ENCODE measurements at regions of chr7 and their contacts with region 1.

Region 1: GRCh38 chr7:97845622-97846203 is 26.5 kb downstream of the ASNS start:
- DNase-seq: peak; percentile 43
- H3K4me3 Mint-ChIP-seq: no peak overlapping the region
- H3K27ac Mint-ChIP-seq: no peak overlapping the region
- H3K4me1 Mint-ChIP-seq: no peaks in the 10 kb centered on the region
- H3K27me3 Mint-ChIP-seq: peaks cover 16% of the 10 kb centered on the region
- CTCF ChIP-seq: peak; percentile 24

Region 2: GRCh38 chr7:97499204-97499603 is 346.5 kb before region 1 on chr7:
- CTCF ChIA-PET with region 1: interaction called, 11 read pairs
- POLR2A ChIA-PET with region 1: no interaction called
- intact Hi-C with region 1: loop called (anchors 2 kb)
- DNase-seq: peak; percentile 56
- H3K4me3 Mint-ChIP-seq: no peak overlapping the region
- H3K27ac Mint-ChIP-seq: no peak overlapping the region
- H3K4me1 Mint-ChIP-seq: no peaks in the 10 kb centered on the region
- H3K27me3 Mint-ChIP-seq: peaks cover 31% of the 10 kb centered on the region
- CTCF ChIP-seq: peak; percentile 46

Region 3: DNA sequence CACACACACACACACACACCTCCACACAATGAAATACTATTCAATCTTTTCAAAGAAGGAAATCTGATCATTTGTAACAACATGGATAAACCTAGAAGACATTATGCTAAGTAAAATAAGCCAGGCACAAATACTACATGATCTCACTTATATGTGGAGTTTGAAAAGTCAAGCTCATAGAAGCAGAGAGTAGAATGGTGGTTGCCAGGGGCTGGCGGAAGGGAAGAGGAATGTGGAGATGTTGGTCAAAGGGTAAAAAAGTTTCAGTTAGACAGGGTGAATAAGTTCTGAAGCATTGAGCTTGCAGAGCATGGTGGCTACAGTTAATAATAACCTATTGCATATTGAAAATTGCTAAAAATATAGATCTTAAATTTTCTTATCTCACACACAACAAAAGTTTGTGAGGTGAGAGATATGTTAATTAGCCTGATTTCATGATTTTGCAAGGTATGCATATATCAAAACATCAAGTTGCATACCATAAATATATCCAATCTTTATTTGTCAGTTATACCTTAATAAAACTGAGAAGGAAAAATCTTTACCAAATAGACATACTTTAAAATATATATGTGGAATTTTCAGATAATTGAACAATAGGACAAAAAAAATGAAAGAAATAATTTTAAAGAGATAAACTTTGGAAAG is 97.4 kb before region 1 on chr7:
- CTCF ChIA-PET with region 1: no interaction called
- POLR2A ChIA-PET with region 1: no interaction called
- intact Hi-C with region 1: no loop called
- DNase-seq: no peak
- H3K4me3 Mint-ChIP-seq: no peak overlapping the region
- H3K27ac Mint-ChIP-seq: no peak overlapping the region
- H3K4me1 Mint-ChIP-seq: no peaks in the 10 kb centered on the region
- H3K27me3 Mint-ChIP-seq: peaks cover 59% of the 10 kb centered on the region
- CTCF ChIP-seq: no peak

Region 4: DNA sequence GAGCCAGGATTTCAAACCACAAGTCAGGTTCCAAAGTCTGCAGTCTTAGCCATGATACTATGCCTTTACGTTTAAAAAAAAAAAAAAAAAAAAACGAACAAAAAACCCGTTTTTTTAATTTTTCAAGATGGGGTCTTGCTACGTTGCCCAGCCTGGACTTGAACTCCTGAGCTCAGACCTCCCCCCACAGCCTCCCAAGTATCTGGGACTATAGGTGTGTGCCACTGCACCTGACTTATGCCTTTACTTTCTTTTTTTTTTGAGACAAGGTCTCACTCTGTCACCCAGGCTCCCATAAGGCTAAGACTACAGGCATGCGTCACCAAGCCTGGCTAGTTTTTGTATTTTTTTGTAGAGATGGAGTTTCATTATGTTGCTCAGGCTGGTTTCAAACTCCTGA is 11.8 kb after region 1 on chr7:
- CTCF ChIA-PET with region 1: interaction called, 39 read pairs
- POLR2A ChIA-PET with region 1: no interaction called
- intact Hi-C with region 1: no loop called
- DNase-seq: no peak
- H3K4me3 Mint-ChIP-seq: no peak overlapping the region
- H3K27ac Mint-ChIP-seq: no peak overlapping the region
- H3K4me1 Mint-ChIP-seq: no peaks in the 10 kb centered on the region
- H3K27me3 Mint-ChIP-seq: no peaks in the 10 kb centered on the region
- CTCF ChIP-seq: no peak

Measured in MCF 10A (cell line).